Endothelial cell of umbilical vein (primary cell): ENCODE measurements at regions of chr13 and their contacts with region 1.

Region 1: DNA sequence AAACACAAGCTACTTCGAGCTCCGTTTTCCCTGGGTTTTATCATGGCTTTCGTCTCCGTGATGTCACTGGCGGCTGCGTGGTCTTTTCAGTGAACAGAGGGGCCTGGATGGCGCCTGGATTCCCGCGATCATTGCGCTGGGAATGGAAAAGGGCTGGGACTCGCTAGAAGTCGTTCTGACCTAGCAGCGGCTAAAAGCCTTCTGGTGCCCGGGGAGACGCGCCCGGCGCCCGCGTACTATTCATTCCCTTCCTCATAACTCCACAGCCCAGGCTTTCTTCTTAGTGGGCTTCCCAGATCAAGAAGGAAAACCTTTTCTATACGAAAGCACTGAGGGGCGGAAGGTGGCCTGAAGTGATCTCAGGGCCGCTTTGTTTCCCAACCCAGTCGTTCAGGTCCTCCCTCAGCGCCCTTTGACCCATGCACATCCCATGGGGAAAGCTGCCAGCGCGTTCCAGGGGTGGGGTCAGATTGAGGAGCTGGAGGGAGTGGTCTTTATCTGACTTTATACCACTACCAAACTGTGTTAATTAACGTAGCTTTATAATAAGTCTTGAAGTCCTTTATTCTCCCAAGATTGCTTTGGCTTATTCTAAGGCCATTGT is 96.6 kb downstream of the ELF1 start:
- DNase-seq: no peak
- H3K4me3 ChIP-seq: no peak overlapping the region
- H3K27ac ChIP-seq: no peak overlapping the region
- H3K4me1 ChIP-seq: peaks cover 10% of the 10 kb centered on the region
- H3K27me3 ChIP-seq: no peaks in the 10 kb centered on the region
- CTCF ChIP-seq: no peak
- POLR2A ChIP-seq: no peak

Region 2: GRCh38 chr13:40789275-40790133 is 133.0 kb before region 1 on chr13 and contains the start of gene SLC25A15:
- CTCF ChIA-PET with region 1: no interaction called
- POLR2A ChIA-PET with region 1: no interaction called
- dilution Hi-C with region 1: no loop called
- intact Hi-C with region 1: loop called (anchors 1 kb)
- DNase-seq: peak; percentile 82
- H3K4me3 ChIP-seq: peak within 1 kb of the TSS; percentile 57 to 66 (median 58)
- H3K27ac ChIP-seq: peak within 1 kb of the TSS; percentile 37
- H3K4me1 ChIP-seq: peaks cover 11% of the 10 kb centered on the region
- H3K27me3 ChIP-seq: no peaks in the 10 kb centered on the region
- CTCF ChIP-seq: peak; percentile 17 to 31
- POLR2A ChIP-seq: peak; percentile 77
- total RNA-seq, gene SLC25A15: 10.8 and 11.5 TPM in 2 replicates

Region 3: GRCh38 chr13:40813661-40814454 is 108.7 kb before region 1 on chr13:
- CTCF ChIA-PET with region 1: interaction called, 10 read pairs
- POLR2A ChIA-PET with region 1: no interaction called
- dilution Hi-C with region 1: no loop called
- intact Hi-C with region 1: no loop called
- DNase-seq: peak; percentile 16
- H3K4me3 ChIP-seq: no peak overlapping the region
- H3K27ac ChIP-seq: no peak overlapping the region
- H3K4me1 ChIP-seq: no peaks in the 10 kb centered on the region
- H3K27me3 ChIP-seq: peaks cover 0 to 3% of the 10 kb centered on the region in 2 experiments
- CTCF ChIP-seq: peak; percentile 53 to 55
- POLR2A ChIP-seq: no peak

Region 4: DNA sequence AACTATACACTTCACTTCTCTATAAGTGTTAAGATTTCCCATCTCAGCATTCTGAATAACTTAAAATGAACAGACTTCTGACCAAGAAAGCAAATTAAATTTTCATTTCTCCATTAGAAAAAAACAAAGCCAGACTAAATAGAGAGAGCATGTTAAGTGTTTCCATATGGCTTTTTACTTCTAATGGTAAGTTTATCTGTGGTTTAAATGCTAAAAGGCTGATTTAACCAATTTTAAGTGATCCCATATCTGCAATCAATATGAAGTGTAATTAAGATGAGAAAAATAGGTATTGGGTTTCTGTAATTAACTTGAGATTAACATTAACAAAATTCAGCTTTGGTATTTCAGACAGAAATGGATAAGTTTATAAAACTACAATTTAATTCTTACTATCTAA is 11.2 kb before region 1 on chr13:
- CTCF ChIA-PET with region 1: interaction called, 11 read pairs
- POLR2A ChIA-PET with region 1: no interaction called
- dilution Hi-C with region 1: no loop called
- intact Hi-C with region 1: no loop called
- DNase-seq: no peak
- H3K4me3 ChIP-seq: no peak overlapping the region
- H3K27ac ChIP-seq: no peak overlapping the region
- H3K4me1 ChIP-seq: no peaks in the 10 kb centered on the region
- H3K27me3 ChIP-seq: no peaks in the 10 kb centered on the region
- CTCF ChIP-seq: no peak
- POLR2A ChIP-seq: no peak